Posterior vena cava (tissue), 2 donors: ENCODE measurements at regions of chr5 and their contacts with region 1.

Region 1: GRCh38 chr5:14983666-14984441 is 112.3 kb upstream of the ANKH start:
- DNase-seq: no peak

Region 2: DNA sequence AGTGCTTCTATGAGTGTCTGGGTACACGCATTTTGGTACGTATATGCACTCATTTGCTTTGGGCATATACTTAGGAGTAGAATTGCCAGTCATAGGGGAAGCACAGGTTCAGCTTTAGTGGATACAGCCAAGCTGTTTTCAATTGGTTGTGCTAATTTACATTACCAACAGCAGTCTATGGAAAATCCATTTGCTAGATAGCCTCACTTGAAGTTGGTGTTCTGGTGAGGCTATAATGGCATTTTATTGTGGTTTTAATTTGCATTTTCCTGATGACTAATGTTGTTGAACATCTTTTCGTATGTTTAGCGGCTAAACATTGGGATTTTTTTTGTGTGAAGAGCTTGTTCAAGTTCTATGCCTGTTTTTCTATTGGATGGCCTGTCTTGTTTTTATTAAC is 35.5 kb before region 1 on chr5:
- intact Hi-C with region 1: loop called in 1 of 2 experiments (anchors 1 kb)
- DNase-seq: no peak